WTC11 (cell line): ENCODE measurements at regions of chr2 and their contacts with region 1.

Region 1: DNA sequence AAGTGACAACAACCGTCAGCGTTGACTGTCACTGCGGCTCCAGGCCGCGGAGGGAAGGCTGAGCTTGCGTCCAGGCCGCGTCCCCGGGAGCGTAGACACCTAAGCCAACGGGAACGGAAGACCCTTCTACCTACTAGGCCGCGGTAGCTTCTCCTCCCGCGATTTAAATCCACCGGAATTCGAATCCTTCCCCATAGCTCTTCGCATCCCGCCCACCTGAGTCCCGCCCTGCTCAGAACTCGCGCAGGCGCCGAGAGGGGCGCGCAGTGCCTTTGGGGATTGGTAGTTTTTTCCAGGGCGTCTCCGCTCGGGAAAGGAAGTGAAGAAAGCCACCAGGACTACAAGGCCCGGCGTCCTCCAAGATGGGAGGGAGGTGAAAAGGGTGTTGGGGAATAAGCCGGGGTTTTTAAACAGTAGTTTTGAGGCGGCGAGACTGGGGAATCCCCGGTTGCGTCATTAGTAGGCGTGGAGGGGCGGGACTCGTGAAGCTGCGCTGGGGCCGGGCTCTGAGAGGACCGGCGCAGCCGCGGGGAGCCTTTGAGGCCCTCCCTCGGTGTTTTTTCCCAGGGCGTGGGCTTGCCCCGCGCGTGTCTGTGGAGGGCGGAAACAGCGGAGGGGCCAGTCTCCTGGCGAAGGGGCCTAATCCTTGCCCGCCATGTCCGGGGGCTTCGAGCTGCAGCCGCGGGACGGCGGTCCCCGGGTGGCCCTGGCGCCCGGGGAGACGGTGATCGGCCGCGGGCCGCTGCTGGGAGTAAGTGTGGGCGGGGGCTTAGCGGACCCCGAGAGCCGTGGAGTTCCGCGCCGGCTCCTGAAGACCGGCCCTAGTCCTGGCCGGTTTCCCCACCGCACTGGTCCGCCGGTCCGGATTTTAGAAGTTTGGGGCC is at the starts of genes APLF and FBXO48:
- DNase-seq: peak; percentile 94
- ATAC-seq: peak; percentile 99
- H3K4me3 Mint-ChIP-seq: peak within 1 kb of the TSS; percentile 97
- H3K27ac Mint-ChIP-seq: peak within 1 kb of the TSS; percentile 77
- H3K4me1 Mint-ChIP-seq: peaks cover 10% of the 10 kb centered on the region; the same call in 1 of the 2 replicates
- H3K27me3 Mint-ChIP-seq: no peaks in the 10 kb centered on the region
- CTCF ChIP-seq: no peak
- total RNA-seq, gene APLF: 2.7 to 4.0 TPM (median 3.9 TPM) in 3 replicates
- total RNA-seq, gene FBXO48: 1.3 to 1.5 TPM (median 1.3 TPM) in 3 replicates

Region 2: GRCh38 chr2:68237404-68237803 is 229.9 kb before region 1 on chr2:
- CTCF ChIA-PET with region 1: no interaction called
- POLR2A ChIA-PET with region 1: no interaction called
- DNase-seq: no peak
- ATAC-seq: no peak
- H3K4me3 Mint-ChIP-seq: no peak overlapping the region
- H3K27ac Mint-ChIP-seq: 0 out of 2 replicates have a peak overlapping the region, but pooled peaks have one; percentile 14
- H3K4me1 Mint-ChIP-seq: peaks cover 60% of the 10 kb centered on the region
- H3K27me3 Mint-ChIP-seq: no peaks in the 10 kb centered on the region
- CTCF ChIP-seq: no peak

Region 3: GRCh38 chr2:68379184-68379708 is 88.1 kb before region 1 on chr2:
- CTCF ChIA-PET with region 1: no interaction called
- POLR2A ChIA-PET with region 1: no interaction called
- DNase-seq: no peak
- ATAC-seq: no peak
- H3K4me3 Mint-ChIP-seq: no peak overlapping the region
- H3K27ac Mint-ChIP-seq: no peak overlapping the region
- H3K4me1 Mint-ChIP-seq: no peaks in the 10 kb centered on the region
- H3K27me3 Mint-ChIP-seq: no peaks in the 10 kb centered on the region; the same call in 1 of the 2 replicates
- CTCF ChIP-seq: no peak

Region 4: GRCh38 chr2:68452168-68452900 is 15.0 kb before region 1 on chr2:
- CTCF ChIA-PET with region 1: interaction called, 10 read pairs
- POLR2A ChIA-PET with region 1: interaction called, 4 read pairs
- DNase-seq: no peak
- ATAC-seq: no peak
- H3K4me3 Mint-ChIP-seq: no peak overlapping the region
- H3K27ac Mint-ChIP-seq: no peak overlapping the region
- H3K4me1 Mint-ChIP-seq: no peaks in the 10 kb centered on the region
- H3K27me3 Mint-ChIP-seq: no peaks in the 10 kb centered on the region
- CTCF ChIP-seq: no peak

Region 5: GRCh38 chr2:68643011-68643873 is 175.9 kb after region 1 on chr2 and contains the start of gene PROKR1:
- CTCF ChIA-PET with region 1: interaction called, 10 read pairs
- POLR2A ChIA-PET with region 1: interaction called, 4 read pairs
- DNase-seq: peak; percentile 72
- ATAC-seq: peak; percentile 73
- H3K4me3 Mint-ChIP-seq: peak within 1 kb of the TSS; percentile 80
- H3K27ac Mint-ChIP-seq: no peak within 1 kb of the TSS
- H3K4me1 Mint-ChIP-seq: peaks cover 15% of the 10 kb centered on the region
- H3K27me3 Mint-ChIP-seq: peaks cover 45% of the 10 kb centered on the region
- CTCF ChIP-seq: no peak
- total RNA-seq, gene PROKR1: 2.6 to 4.4 TPM (median 2.8 TPM) in 3 replicates

Region 6: GRCh38 chr2:68715353-68716041 is 248.2 kb after region 1 on chr2:
- CTCF ChIA-PET with region 1: interaction called, 10 read pairs
- POLR2A ChIA-PET with region 1: no interaction called
- DNase-seq: peak; percentile 83
- ATAC-seq: peak; percentile 100
- H3K4me3 Mint-ChIP-seq: no peak overlapping the region
- H3K27ac Mint-ChIP-seq: no peak overlapping the region
- H3K4me1 Mint-ChIP-seq: no peaks in the 10 kb centered on the region
- H3K27me3 Mint-ChIP-seq: no peaks in the 10 kb centered on the region
- CTCF ChIP-seq: peak; percentile 45

Region 7: GRCh38 chr2:68925295-68925896 is 458.1 kb after region 1 on chr2:
- CTCF ChIA-PET with region 1: interaction called, 17 read pairs
- POLR2A ChIA-PET with region 1: no interaction called
- DNase-seq: peak; percentile 38
- ATAC-seq: peak; percentile 90
- H3K4me3 Mint-ChIP-seq: no peak overlapping the region
- H3K27ac Mint-ChIP-seq: no peak overlapping the region
- H3K4me1 Mint-ChIP-seq: peaks cover 5% of the 10 kb centered on the region
- H3K27me3 Mint-ChIP-seq: no peaks in the 10 kb centered on the region
- CTCF ChIP-seq: peak; percentile 63